ENCODE measurements at regions of chr15 and their contacts with region 1.

Region 1: DNA sequence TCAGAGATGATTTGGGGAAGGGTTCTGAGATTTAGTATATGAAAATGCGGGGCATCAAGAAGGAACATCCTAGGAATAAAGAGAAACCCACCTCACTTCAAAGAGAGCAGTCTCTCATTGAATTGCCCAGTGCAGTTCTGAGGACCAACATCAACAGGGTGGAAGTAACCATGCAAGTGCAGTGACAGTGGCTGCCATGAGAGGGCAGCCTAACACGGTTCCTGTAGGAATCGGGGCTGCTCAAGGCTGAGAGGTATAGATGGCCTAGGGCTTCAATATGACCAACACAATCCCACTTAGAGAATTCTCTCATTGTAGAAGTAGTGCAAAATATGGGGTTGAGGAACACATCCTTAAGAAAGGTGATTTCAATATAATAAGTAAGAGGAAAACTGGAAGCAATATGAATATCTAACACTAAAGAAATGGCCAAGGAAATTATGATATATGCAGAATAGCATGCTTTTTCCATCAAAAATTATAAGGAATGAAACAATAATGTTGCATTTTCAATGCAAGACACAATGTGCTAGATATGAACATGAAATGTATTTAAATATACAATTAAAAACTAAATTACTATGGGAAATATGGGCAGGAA is 51.1 kb upstream of the ARRDC4 start:
- DNase-seq: peak; percentile 42 to 83 (median 69)
- H3K4me3 ChIP-seq: no peak overlapping the region
- H3K27ac ChIP-seq: no peak overlapping the region
- H3K4me1 ChIP-seq: no peaks in the 10 kb centered on the region
- H3K27me3 ChIP-seq: peaks cover 16% of the 10 kb centered on the region
- CTCF ChIP-seq: peak; percentile 66 to 92 (median 88)
- POLR2A ChIP-seq: no peak

Region 2: DNA sequence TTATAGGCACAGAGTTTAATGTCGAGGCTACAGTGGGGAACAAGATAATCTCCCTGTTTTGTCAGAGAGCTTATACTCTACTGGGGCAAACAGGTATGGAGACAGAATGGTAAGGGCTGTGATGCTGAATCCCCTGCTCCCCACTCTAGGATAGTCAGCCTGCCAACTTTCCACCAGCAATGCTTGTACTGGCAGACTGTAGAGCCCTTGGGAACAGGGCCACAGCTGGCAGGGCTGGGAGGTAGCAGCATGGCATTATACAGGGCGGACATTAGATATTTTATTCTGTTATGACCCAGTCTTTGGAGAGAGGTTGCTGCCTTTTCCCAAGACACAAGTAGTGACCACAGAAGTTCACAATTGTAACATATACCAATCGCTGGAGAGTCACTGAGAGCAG is 142.3 kb after region 1 on chr15:
- intact Hi-C with region 1: no loop called
- DNase-seq: no peak
- H3K4me3 ChIP-seq: no peak overlapping the region
- H3K27ac ChIP-seq: no peak overlapping the region
- H3K4me1 ChIP-seq: no peaks in the 10 kb centered on the region
- H3K27me3 ChIP-seq: no peaks in the 10 kb centered on the region
- CTCF ChIP-seq: no peak
- POLR2A ChIP-seq: no peak

Region 3: GRCh38 chr15:98085003-98085639 is 175.7 kb after region 1 on chr15:
- intact Hi-C with region 1: loop called (anchors 2 to 5 kb)
- DNase-seq: peak; percentile 51 to 75 (median 60)
- H3K4me3 ChIP-seq: no peak overlapping the region
- H3K27ac ChIP-seq: no peak overlapping the region
- H3K4me1 ChIP-seq: no peaks in the 10 kb centered on the region
- H3K27me3 ChIP-seq: no peaks in the 10 kb centered on the region
- CTCF ChIP-seq: peak; percentile 70 to 75 (median 72)
- POLR2A ChIP-seq: no peak

Region 4: DNA sequence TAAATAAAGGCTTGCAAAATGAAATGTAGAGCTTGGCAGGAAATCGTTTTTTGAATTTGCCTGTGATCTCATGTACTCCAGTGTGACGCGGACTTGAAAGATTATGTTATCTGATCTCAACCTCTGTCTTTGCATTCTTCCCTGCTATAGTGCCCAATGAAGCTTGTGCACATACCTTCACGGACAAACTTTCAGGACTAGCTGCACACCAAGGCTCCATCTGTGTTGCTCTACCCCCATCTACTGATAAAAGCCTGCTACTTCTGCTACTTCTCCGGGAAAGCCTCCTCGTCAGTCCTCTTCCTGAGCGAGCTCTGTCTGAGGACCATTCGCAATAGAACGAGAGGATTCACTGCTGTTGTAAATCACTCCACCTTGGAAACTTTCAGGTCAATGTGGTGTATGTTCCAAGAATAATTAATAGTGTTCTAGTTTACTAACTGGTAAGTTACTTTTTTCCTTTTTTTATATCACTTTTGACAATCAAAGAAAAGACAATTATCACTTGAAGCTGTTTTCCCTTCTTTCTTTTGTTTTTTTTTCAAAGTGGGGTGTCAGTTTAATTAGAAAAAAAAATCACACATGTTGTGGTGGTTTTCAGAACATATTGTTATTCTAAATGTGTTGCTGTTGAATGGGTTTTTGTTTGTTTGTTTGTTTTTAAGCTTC is 268.7 kb after region 1 on chr15:
- intact Hi-C with region 1: loop called (anchors 5 to 10 kb)
- DNase-seq: peak; percentile 35 to 61 (median 55)
- H3K4me3 ChIP-seq: no peak overlapping the region
- H3K27ac ChIP-seq: no peak overlapping the region
- H3K4me1 ChIP-seq: no peaks in the 10 kb centered on the region
- H3K27me3 ChIP-seq: peaks cover 23% of the 10 kb centered on the region
- CTCF ChIP-seq: peak; percentile 45 to 85 (median 72)
- POLR2A ChIP-seq: no peak

Measured in adrenal gland (tissue), 19 donors.